Mammary epithelial cell (primary cell): ENCODE measurements at regions of chr12 and their contacts with region 1.

Region 1: DNA sequence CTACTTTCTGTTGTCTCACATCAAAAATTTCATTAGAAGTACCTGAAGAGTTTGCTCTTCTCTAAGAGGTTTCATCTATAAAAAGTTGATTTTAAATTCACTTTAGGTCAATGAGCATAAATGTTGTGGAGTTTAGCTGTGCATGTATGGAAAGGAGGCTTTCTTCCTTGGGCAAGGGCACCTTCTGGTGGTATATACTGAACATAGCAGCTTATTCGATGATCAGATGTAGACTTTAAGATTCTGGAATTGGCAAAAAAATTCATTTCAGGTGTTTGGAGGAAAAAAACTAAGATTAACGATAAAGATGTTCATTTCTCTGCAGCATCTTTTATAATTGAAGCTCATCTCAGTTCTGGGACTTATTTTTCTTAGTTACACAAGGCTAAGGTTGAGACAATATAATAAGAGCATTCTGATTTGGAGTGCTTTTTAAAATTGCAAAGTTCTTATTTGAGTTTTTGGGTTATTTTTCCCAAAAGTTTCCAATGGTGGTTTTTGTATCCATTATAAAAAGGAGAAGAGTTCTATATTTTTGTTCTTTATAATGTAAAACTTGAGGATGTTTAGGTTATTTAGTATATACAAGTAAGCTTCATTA is 46.8 kb downstream of the TMEM117 start:
- DNase-seq: peak; percentile 49
- H3K4me3 ChIP-seq: no peak overlapping the region
- H3K27ac ChIP-seq: no peak overlapping the region
- H3K4me1 ChIP-seq: peaks cover 20% of the 10 kb centered on the region
- H3K27me3 ChIP-seq: no peaks in the 10 kb centered on the region
- CTCF ChIP-seq: peak; percentile 91 to 96

Region 2: DNA sequence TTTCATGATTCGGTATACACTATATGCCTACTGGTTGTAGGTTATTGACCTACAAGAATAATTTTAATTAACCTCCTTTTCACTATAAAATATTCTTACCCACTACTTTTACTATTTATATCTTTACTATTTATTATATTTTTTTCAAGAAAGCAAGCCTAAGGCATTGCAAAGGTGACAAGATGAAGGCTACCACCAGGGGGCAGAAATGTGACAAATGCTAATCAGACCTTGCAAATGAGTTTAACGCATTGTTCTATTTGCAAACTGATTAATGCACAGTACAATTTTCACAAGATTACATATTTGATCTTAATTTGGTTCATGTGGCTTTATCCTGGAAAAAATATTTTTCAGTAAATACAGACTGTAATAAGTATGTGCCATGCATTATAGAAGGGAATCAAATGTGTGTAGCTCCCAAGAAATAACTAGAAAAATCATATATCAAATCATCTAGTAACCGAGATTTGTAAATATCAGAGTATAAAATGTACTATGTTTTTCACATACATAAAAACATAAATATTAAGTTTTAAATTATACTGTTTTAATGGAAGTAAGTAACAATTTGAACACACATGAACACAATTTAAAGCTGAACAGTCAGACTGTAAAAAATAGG is 437.6 kb before region 1 on chr12:
- CTCF ChIA-PET with region 1: no interaction called
- dilution Hi-C with region 1: no loop called
- in situ Hi-C with region 1: no loop called
- intact Hi-C with region 1: loop called (anchors 1 kb)
- DNase-seq: peak; percentile 45
- H3K4me3 ChIP-seq: no peak overlapping the region
- H3K27ac ChIP-seq: no peak overlapping the region
- H3K4me1 ChIP-seq: no peaks in the 10 kb centered on the region
- H3K27me3 ChIP-seq: peaks cover 2% of the 10 kb centered on the region
- CTCF ChIP-seq: peak; percentile 82 to 86

Region 3: GRCh38 chr12:43758728-43759563 is 123.7 kb before region 1 on chr12 and contains the starts of genes IRAK4 and PUS7L:
- CTCF ChIA-PET with region 1: interaction called, 18 read pairs
- dilution Hi-C with region 1: no loop called
- in situ Hi-C with region 1: loop called in 1 of 2 experiments (anchors 5 kb)
- intact Hi-C with region 1: loop called (anchors 1 kb)
- DNase-seq: peak; percentile 94
- H3K4me3 ChIP-seq: peak within 1 kb of the TSS; percentile 65 to 87 (median 80)
- H3K27ac ChIP-seq: peak within 1 kb of the TSS; percentile 81
- H3K4me1 ChIP-seq: peaks cover 25% of the 10 kb centered on the region
- H3K27me3 ChIP-seq: no peaks in the 10 kb centered on the region
- CTCF ChIP-seq: peak; percentile 39 to 57
- total RNA-seq, gene IRAK4: 15.8 to 18.7 TPM
- total RNA-seq, gene PUS7L: 18.7 to 20.0 TPM

Region 4: GRCh38 chr12:43805860-43806736 is 76.6 kb before region 1 on chr12 and contains the start of gene TWF1:
- CTCF ChIA-PET with region 1: no interaction called
- dilution Hi-C with region 1: no loop called
- in situ Hi-C with region 1: loop called in 1 of 2 experiments (anchors 10 kb)
- intact Hi-C with region 1: loop called (anchors 1 kb)
- DNase-seq: peak; percentile 84
- H3K4me3 ChIP-seq: peak within 1 kb of the TSS; percentile 70 to 99 (median 95)
- H3K27ac ChIP-seq: peak within 1 kb of the TSS; percentile 96
- H3K4me1 ChIP-seq: peaks cover 14% of the 10 kb centered on the region
- H3K27me3 ChIP-seq: no peaks in the 10 kb centered on the region
- CTCF ChIP-seq: peak; percentile 4 to 46
- total RNA-seq, gene TWF1: 170 to 187 TPM

Region 5: DNA sequence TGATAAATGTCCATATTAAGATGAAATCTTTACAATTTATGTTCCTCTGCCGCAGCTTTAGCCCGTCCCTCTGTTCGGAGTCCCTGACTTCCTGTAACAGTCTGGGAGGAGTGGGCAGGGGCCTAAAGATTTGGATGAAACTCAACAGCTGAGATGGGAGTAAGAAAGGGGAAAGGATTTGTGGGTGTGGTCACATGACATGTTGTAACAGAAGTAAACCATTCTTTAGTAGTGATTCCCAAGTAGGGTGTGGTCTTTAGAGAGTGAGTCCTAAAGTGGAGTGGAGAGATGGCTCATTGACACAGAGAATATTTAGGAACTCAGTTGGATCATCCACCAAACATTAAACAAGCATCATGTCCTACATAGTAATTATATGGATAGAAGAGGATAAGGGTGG is 33.9 kb before region 1 on chr12:
- CTCF ChIA-PET with region 1: interaction called, 11 read pairs
- dilution Hi-C with region 1: no loop called
- in situ Hi-C with region 1: no loop called
- intact Hi-C with region 1: no loop called
- DNase-seq: peak; percentile 68
- H3K4me3 ChIP-seq: no peak overlapping the region
- H3K27ac ChIP-seq: peak overlapping the region; percentile 90
- H3K4me1 ChIP-seq: peaks cover 26% of the 10 kb centered on the region
- H3K27me3 ChIP-seq: no peaks in the 10 kb centered on the region
- CTCF ChIP-seq: no peak

Region 6: GRCh38 chr12:44930972-44931600 is 1048.4 kb after region 1 on chr12:
- CTCF ChIA-PET with region 1: no interaction called
- dilution Hi-C with region 1: no loop called
- in situ Hi-C with region 1: no loop called
- intact Hi-C with region 1: loop called (anchors 2 kb)
- DNase-seq: peak; percentile 47
- H3K4me3 ChIP-seq: no peak overlapping the region
- H3K27ac ChIP-seq: no peak overlapping the region
- H3K4me1 ChIP-seq: no peaks in the 10 kb centered on the region
- H3K27me3 ChIP-seq: no peaks in the 10 kb centered on the region
- CTCF ChIP-seq: peak; percentile 28 to 50